Activated naive CD4-positive, alpha-beta T cell treated with anti-CD3 and anti-CD28 coated beads, Interleukin-2, amount 10 ng/mL, durations not matched to agents 7 days and 5 days (primary cell): ENCODE measurements at regions of chr5 and their contacts with region 1.

Region 1: GRCh38 chr5:38809388-38810359 is 36.1 kb upstream of the OSMR start:
- DNase-seq: peak; percentile 73
- H3K4me3 Mint-ChIP-seq: no peak overlapping the region
- H3K27ac Mint-ChIP-seq: no peak overlapping the region
- H3K4me1 Mint-ChIP-seq: peaks cover 2% of the 10 kb centered on the region
- H3K27me3 Mint-ChIP-seq: peaks cover 22% of the 10 kb centered on the region

Region 2: DNA sequence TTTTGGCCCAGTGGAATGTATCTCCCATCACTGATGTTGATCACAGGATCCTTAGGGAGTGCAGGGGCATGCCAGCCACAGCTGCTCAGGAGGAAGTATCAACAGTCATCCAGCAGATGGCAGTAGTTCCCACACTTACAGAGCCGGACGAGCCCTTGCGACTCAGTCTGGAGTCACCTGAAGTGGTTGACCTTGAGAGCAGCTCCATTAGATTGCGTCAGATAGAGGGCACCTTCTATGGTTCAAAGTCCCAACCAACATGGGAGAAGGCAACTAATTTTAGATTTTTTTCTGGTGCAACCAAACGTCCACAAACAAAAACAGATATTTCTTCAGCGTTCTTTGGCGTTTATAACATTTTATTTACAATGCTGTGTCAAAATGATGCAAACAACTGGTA is 426.8 kb before region 1 on chr5:
- CTCF ChIA-PET with region 1: interaction called, 23 read pairs
- DNase-seq: peak; percentile 67
- H3K4me3 Mint-ChIP-seq: no peak overlapping the region
- H3K27ac Mint-ChIP-seq: no peak overlapping the region
- H3K4me1 Mint-ChIP-seq: peaks cover 19% of the 10 kb centered on the region
- H3K27me3 Mint-ChIP-seq: peaks cover 35% of the 10 kb centered on the region

Region 3: DNA sequence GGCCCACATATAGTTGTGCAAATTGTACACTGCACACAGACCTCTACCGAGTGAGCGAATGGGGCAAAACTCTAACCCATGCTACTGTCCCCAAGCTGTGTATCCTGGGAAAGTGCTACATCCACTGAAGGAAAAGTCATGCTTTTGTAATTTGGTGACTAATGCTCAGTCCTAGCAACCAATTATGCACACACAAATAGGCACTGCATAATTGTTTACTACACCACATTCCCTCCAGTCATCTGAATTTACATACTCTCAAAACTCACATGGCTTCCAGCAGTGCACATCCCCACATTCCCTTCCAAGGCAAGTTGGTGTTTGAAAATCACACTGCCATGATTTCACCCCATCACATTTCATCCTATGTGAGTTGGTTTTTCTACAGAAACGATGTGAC is 89.8 kb before region 1 on chr5:
- CTCF ChIA-PET with region 1: no interaction called
- DNase-seq: no peak
- H3K4me3 Mint-ChIP-seq: no peak overlapping the region
- H3K27ac Mint-ChIP-seq: no peak overlapping the region
- H3K4me1 Mint-ChIP-seq: no peaks in the 10 kb centered on the region
- H3K27me3 Mint-ChIP-seq: no peaks in the 10 kb centered on the region